ENCODE measurements at regions of chr14 and their contacts with region 1.

Region 1: GRCh38 chr14:37874429-37875191 is 279.2 kb downstream of the TTC6 start:
- DNase-seq: peak; percentile 80 to 95 (median 93)
- ATAC-seq: peak; percentile 100
- H3K4me3 ChIP-seq: no peak overlapping the region
- H3K4me1 ChIP-seq: no peaks in the 10 kb centered on the region
- CTCF ChIP-seq: peak; percentile 67

Region 2: DNA sequence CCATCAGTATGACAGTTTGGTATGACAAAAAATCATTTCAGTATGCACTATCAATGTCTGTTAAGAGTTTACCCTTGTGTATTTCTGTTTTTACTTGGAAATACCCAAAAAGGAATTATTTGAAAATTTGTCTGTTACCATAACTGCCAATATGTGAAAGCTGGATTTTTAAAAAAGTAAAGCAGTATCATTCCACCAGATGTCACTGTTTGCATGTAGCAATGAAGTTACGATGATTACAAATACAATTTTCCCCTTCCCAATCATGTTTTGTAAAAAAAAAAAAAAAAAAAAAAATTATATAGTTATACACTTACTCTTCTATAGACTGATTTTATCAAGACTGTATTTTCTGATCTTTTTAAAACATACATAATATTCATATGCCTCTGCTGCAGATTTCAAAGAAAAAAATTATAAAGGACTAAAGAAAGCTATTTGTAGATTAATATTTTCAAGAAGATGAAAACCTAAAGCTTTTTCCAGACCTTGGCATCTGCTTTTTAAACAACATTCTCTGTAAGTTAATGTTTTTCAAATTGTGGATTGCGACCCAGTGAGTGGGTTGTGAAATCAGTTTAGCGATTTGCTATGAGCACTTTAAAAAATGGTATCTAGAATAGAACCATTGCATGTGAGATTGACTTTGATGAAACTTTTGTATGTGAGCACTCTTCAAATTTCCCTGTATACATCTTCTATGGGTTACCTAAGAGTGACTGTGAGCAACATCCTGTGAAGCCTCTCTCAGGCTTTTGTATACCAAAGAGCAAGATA is 165.0 kb before region 1 on chr14:
- intact Hi-C with region 1: loop called (anchors 5 to 10 kb)
- DNase-seq: no peak
- ATAC-seq: no peak
- H3K4me3 ChIP-seq: no peak overlapping the region
- H3K4me1 ChIP-seq: no peaks in the 10 kb centered on the region
- CTCF ChIP-seq: no peak

Region 3: DNA sequence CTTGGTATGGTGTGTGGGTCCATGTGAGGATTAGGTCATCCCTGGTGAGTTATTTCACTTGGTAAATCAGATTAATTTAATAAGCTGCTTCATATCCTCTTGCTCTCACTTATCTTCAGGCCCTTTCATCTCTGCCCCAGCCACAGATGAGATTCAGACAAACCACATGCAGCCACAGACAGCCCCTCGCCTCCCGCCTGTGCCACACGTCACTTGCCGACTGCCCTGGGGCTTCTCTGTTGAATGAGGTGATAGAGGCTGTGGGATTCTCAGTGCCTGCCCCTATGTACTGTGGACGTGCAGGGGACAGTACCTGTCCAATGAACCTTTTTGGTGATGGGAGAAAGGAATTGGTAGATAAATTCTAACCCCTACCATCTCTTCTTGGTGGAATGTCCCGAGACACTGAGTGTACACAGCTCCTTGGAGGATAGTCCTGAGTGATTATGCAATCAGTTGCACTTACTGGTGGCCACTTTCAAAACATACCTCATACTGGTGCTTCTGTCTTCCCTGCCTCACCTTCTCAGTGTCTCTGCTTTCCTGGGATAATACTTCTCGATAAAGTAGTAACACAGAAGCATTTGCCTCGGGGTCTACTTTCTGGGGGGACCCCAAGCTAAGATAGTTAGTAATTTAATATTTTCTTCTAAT is 30.5 kb before region 1 on chr14:
- intact Hi-C with region 1: no loop called
- DNase-seq: no peak
- ATAC-seq: no peak
- H3K4me3 ChIP-seq: no peak overlapping the region
- H3K4me1 ChIP-seq: no peaks in the 10 kb centered on the region
- CTCF ChIP-seq: no peak

Measured in mucosa of descending colon (tissue), 3 donors.